CD4-positive, alpha-beta T cell (primary cell): ENCODE measurements at regions of chr1 and their contacts with region 1.

Region 1: GRCh38 chr1:32072622-32073298 is at the start of gene TMEM39B:
- DNase-seq: peak; percentile 86 to 98 (median 92)
- ATAC-seq: peak; percentile 84
- H3K4me3 ChIP-seq: peak within 1 kb of the TSS; percentile 71
- H3K4me3 Mint-ChIP-seq: peak within 1 kb of the TSS; percentile 89
- H3K27ac ChIP-seq: peak within 1 kb of the TSS; percentile 50 to 68
- H3K27ac Mint-ChIP-seq: peak within 1 kb of the TSS; percentile 82
- H3K4me1 ChIP-seq: peaks cover 27% of the 10 kb centered on the region
- H3K4me1 Mint-ChIP-seq: peaks cover 39% of the 10 kb centered on the region
- H3K27me3 ChIP-seq: no peaks in the 10 kb centered on the region
- H3K27me3 Mint-ChIP-seq: no peaks in the 10 kb centered on the region
- CTCF ChIP-seq: no peak
- total RNA-seq, gene TMEM39B: 7.2 to 7.9 TPM

Region 2: DNA sequence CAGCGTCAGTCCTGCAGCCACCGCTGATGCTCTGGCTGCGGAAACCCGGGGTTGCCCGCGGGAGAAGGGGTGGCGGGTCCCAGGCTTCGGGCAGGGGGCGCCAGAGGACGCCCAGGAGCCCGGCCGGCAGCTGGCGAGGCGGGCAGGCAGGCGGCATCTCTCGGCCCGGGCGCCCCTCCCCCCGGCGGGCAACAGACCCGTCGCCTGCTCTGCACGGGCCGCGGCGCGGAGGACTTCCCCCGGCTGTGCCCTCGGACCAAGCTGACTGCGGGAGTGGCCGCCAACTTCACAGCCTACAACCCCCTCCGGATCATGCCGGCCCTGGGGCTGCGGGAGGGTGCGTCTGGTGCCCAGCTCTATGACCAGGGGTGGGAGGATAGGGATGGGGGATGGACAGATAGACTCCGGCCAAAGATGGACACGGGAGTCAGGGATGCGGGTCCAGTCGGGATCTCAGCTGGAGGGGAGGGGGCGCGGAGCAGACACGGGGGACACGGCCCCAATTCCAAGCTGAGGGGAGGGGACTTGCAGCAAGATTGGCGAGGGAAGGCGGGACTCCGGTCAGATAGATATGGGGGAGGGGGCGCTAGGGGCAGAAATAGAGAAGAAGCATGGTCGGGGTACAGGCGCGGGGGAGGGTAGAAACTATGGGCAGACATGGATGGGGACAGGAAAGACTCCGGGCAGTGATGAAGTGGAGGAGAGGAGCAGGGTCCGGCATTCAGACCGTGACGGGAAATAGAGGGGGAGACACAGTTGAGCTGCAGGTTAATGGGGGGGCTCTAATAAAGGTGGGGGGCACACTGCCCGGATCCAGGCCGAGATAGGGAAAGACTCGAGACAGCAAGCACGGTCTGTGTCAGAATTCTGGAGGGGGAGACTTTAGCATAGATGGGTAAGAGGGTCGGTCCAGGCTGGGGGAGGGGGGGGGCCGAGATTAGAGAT is 309.8 kb before region 1 on chr1:
- CTCF ChIA-PET with region 1: no interaction called
- POLR2A ChIA-PET with region 1: interaction called, 5 read pairs
- intact Hi-C with region 1: loop called in 1 of 2 experiments (anchors 5 kb)
- DNase-seq: peak; percentile 48 to 88 (median 62)
- ATAC-seq: peak; percentile 51
- H3K4me3 ChIP-seq: peak overlapping the region; percentile 42
- H3K4me3 Mint-ChIP-seq: peak overlapping the region; percentile 86
- H3K27ac ChIP-seq: no peak overlapping the region
- H3K27ac Mint-ChIP-seq: no peak overlapping the region
- H3K4me1 ChIP-seq: peaks cover 46% of the 10 kb centered on the region
- H3K4me1 Mint-ChIP-seq: peaks cover 26% of the 10 kb centered on the region
- H3K27me3 ChIP-seq: peaks cover 11% of the 10 kb centered on the region in 2 experiments
- H3K27me3 Mint-ChIP-seq: peaks cover 15% of the 10 kb centered on the region
- CTCF ChIP-seq: peak; percentile 61

Region 3: DNA sequence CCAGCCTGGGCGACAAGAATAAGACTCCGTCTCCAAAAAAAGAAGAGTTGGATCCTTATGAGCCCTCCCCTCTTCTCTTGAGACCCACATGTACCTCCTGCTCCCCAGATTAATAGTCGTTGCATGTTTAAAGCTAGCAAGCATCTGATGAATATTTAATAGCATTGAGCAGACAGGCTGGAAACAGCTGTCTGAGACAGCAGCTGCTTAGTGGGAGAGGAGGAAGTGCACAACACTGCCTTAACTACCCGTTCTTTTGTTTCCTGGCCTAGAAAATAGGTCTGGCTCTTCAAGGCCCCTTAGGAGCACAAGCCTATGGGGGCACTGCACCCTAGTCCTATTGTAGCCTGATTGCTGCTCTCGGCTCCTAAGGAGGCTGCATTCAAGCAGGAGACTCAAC is 17.3 kb before region 1 on chr1:
- CTCF ChIA-PET with region 1: no interaction called
- POLR2A ChIA-PET with region 1: interaction called, 15 read pairs
- intact Hi-C with region 1: no loop called
- DNase-seq: no peak
- ATAC-seq: no peak
- H3K4me3 ChIP-seq: no peak overlapping the region
- H3K4me3 Mint-ChIP-seq: no peak overlapping the region
- H3K27ac ChIP-seq: no peak overlapping the region
- H3K27ac Mint-ChIP-seq: peak overlapping the region; percentile 33
- H3K4me1 ChIP-seq: no peaks in the 10 kb centered on the region
- H3K4me1 Mint-ChIP-seq: no peaks in the 10 kb centered on the region
- H3K27me3 ChIP-seq: no peaks in the 10 kb centered on the region
- H3K27me3 Mint-ChIP-seq: no peaks in the 10 kb centered on the region
- CTCF ChIP-seq: no peak

Region 4: GRCh38 chr1:32179443-32180185 is 106.9 kb after region 1 on chr1 and contains the start of gene TXLNA:
- CTCF ChIA-PET with region 1: interaction called, 4 read pairs
- POLR2A ChIA-PET with region 1: interaction called, 14 read pairs
- intact Hi-C with region 1: no loop called
- DNase-seq: peak; percentile 77 to 94 (median 84)
- ATAC-seq: peak; percentile 85
- H3K4me3 ChIP-seq: peak within 1 kb of the TSS; percentile 90
- H3K4me3 Mint-ChIP-seq: peak within 1 kb of the TSS; percentile 91
- H3K27ac ChIP-seq: peak within 1 kb of the TSS; percentile 77 to 93
- H3K27ac Mint-ChIP-seq: peak within 1 kb of the TSS; percentile 93
- H3K4me1 ChIP-seq: peaks cover 46% of the 10 kb centered on the region
- H3K4me1 Mint-ChIP-seq: peaks cover 49% of the 10 kb centered on the region
- H3K27me3 ChIP-seq: no peaks in the 10 kb centered on the region
- H3K27me3 Mint-ChIP-seq: no peaks in the 10 kb centered on the region
- CTCF ChIP-seq: no peak
- total RNA-seq, gene TXLNA: 6.3 to 6.4 TPM

Region 5: GRCh38 chr1:32650752-32651460 is 578.1 kb after region 1 on chr1 and contains the start of gene RBBP4:
- CTCF ChIA-PET with region 1: no interaction called
- POLR2A ChIA-PET with region 1: interaction called, 12 read pairs
- intact Hi-C with region 1: loop called in 1 of 2 experiments (anchors 10 kb)
- DNase-seq: peak; percentile 94 to 99 (median 98)
- ATAC-seq: peak; percentile 79
- H3K4me3 ChIP-seq: peak within 1 kb of the TSS; percentile 80
- H3K4me3 Mint-ChIP-seq: peak within 1 kb of the TSS; percentile 94
- H3K27ac ChIP-seq: peak within 1 kb of the TSS; percentile 98 to 99
- H3K27ac Mint-ChIP-seq: peak within 1 kb of the TSS; percentile 95
- H3K4me1 ChIP-seq: peaks cover 58% of the 10 kb centered on the region
- H3K4me1 Mint-ChIP-seq: peaks cover 66% of the 10 kb centered on the region
- H3K27me3 ChIP-seq: no peaks in the 10 kb centered on the region
- H3K27me3 Mint-ChIP-seq: no peaks in the 10 kb centered on the region
- CTCF ChIP-seq: no peak
- total RNA-seq, gene RBBP4: 108 to 117 TPM